ENCODE measurements at regions of chr9 and their contacts with region 1.

Region 1: DNA sequence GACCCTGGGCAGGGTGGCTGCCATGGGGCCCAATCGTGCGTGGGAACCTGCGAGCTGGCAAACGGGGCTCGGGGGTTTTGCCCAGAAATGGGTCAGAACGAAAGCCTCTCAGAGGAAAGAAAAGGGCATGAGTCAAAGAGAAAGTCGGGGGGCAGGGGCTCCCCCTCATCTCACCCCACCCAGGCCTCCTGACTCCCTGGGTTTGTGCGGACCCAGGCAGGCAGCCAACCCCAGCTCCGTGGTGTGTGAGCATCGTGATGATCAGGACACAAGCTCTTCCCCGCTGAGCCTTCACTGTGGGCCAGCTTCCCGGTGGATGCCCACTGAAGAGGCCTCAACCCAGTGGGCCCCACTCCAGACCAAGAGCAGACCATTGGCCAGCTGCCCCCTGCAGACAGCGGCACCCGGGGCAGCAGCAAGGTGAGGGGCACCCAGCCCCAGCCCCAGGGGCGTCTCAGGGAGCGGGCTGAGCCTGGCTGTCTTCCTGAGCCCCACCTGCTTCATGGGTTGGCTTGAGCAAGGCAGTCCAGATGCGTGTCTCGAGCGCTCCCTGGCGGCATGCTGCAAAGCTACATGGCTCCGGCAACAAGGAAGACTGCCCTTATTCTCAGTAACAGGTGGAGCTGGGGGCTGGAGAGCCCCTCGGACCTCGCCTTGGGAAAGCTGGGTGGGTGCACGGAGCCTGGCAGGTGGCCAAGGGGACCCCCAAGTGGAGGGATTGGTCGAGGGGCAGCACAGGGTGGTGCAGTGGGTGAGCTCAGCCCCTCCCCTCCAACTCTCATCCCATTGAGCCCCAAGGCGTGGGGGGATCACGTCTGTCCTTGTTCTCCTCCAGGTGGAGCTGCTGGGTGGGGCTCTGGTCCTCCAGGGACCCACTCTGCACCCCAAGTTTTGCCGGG is 3.2 kb upstream of the FUT7 start:
- DNase-seq: peak; percentile 81
- H3K4me3 Mint-ChIP-seq: peak overlapping the region; percentile 25
- H3K27ac Mint-ChIP-seq: no peak overlapping the region
- H3K4me1 Mint-ChIP-seq: no peaks in the 10 kb centered on the region
- H3K27me3 Mint-ChIP-seq: no peaks in the 10 kb centered on the region
- CTCF ChIP-seq: peak; percentile 87

Region 2: DNA sequence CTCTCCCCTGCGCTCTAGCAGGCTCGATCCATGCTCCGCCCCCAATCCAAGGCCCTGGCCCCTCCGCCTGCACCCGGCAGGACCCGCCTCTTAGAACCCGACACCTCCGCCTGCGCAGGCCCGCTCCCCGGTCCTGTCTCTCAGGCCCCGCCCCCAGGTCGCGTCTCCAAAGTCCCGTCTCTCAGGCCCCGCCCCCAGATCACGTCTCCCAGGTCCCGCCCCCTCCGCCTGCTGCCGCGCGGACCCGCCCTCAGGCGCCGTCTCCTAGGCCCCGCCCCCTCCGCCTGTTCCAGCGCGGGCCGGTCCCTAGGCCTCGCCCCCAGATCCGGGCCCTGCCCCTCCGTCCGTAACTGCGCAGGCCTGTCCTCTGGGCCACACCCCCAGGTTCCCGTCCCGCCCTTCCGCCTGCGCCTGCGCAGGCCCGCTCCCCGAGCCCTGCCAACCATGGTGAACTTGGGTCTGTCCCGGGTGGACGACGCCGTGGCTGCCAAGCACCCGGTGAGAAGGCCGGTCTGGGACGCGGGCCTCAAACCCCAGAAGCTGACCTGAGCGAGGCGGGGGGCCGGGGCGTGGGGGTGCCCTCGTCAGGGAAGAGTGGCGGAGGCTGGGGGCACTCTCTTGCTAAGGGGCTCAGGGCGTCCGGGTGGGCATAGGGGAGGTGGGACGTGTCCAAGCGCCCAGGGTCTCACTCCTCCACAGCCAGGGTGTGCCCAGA is 244.0 kb before region 1 on chr9 and contains the start of gene TMEM141:
- CTCF ChIA-PET with region 1: interaction called, 24 read pairs
- POLR2A ChIA-PET with region 1: no interaction called
- intact Hi-C with region 1: loop called (anchors 1 kb)
- DNase-seq: peak; percentile 99
- H3K4me3 Mint-ChIP-seq: peak within 1 kb of the TSS; percentile 81
- H3K27ac Mint-ChIP-seq: peak within 1 kb of the TSS; percentile 94
- H3K4me1 Mint-ChIP-seq: peaks cover 5% of the 10 kb centered on the region
- H3K27me3 Mint-ChIP-seq: no peaks in the 10 kb centered on the region
- CTCF ChIP-seq: no peak
- total RNA-seq, gene TMEM141: 56.0 and 70.4 TPM in 2 replicates

Region 3: DNA sequence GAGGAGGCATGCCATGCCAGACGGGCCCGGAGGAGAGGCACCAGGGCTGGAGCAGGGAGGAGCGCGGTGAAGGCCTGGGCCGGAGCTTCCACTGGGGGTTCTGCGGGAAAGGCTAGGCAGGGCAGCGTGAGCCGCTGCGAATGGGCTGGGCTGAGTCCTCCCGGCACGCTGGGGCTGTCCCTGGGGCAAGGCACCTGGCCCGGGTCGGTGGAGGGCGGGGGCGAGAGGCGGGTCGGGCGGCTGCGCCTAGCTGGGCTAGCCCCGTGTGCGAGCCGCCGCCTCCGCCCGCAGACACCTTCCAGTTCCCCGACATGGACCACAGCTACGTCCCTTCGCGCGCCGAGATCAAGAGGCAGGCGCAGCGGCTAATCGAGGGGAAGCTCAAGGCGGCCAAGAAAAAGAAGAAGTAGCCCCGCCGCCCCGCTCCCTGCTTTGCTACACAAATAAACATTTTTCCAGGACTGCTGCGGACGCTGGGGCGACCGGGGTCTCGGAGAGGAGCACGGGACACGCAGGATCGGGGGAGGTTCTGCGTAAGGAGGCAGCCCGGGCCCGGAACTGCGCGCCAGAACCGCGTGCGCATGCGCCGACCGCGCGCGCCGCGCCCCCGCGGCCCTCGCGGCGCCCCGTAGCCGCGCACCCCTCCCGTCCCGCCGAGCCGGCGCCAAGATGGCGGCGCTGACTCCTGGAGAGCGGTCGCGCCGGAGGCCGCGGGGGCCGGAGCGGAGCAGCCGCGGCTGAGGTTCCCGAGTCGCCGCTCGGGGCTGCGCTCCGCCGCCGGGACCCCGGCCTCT is 227.6 kb before region 1 on chr9 and contains the start of gene RABL6:
- CTCF ChIA-PET with region 1: interaction called, 11 read pairs
- POLR2A ChIA-PET with region 1: no interaction called
- intact Hi-C with region 1: no loop called
- DNase-seq: peak; percentile 64
- H3K4me3 Mint-ChIP-seq: peak within 1 kb of the TSS; percentile 76
- H3K27ac Mint-ChIP-seq: no peak within 1 kb of the TSS
- H3K4me1 Mint-ChIP-seq: no peaks in the 10 kb centered on the region
- H3K27me3 Mint-ChIP-seq: no peaks in the 10 kb centered on the region
- CTCF ChIP-seq: no peak
- total RNA-seq, gene RABL6: 77.8 and 84.2 TPM in 2 replicates

Region 4: GRCh38 chr9:136944519-136945279 is 90.4 kb before region 1 on chr9 and contains the starts of genes C8G and FBXW5:
- CTCF ChIA-PET with region 1: interaction called, 27 read pairs
- POLR2A ChIA-PET with region 1: interaction called, 3 read pairs
- intact Hi-C with region 1: loop called (anchors 1 kb)
- DNase-seq: peak; percentile 93
- H3K4me3 Mint-ChIP-seq: peak within 1 kb of the TSS; percentile 70
- H3K27ac Mint-ChIP-seq: peak within 1 kb of the TSS; percentile 69
- H3K4me1 Mint-ChIP-seq: no peaks in the 10 kb centered on the region
- H3K27me3 Mint-ChIP-seq: no peaks in the 10 kb centered on the region
- CTCF ChIP-seq: peak; percentile 91
- total RNA-seq, gene C8G: 1.0 and 1.1 TPM in 2 replicates
- total RNA-seq, gene FBXW5: 88.8 and 100 TPM in 2 replicates

Region 5: GRCh38 chr9:137046098-137046787 is 11.1 kb after region 1 on chr9 and contains the start of gene NPDC1:
- CTCF ChIA-PET with region 1: interaction called, 15 read pairs
- POLR2A ChIA-PET with region 1: interaction called, 4 read pairs
- intact Hi-C with region 1: no loop called
- DNase-seq: peak; percentile 82
- H3K4me3 Mint-ChIP-seq: peak within 1 kb of the TSS; percentile 74
- H3K27ac Mint-ChIP-seq: no peak within 1 kb of the TSS
- H3K4me1 Mint-ChIP-seq: no peaks in the 10 kb centered on the region
- H3K27me3 Mint-ChIP-seq: no peaks in the 10 kb centered on the region
- CTCF ChIP-seq: peak; percentile 87
- total RNA-seq, gene NPDC1: 161 and 171 TPM in 2 replicates

Region 6: DNA sequence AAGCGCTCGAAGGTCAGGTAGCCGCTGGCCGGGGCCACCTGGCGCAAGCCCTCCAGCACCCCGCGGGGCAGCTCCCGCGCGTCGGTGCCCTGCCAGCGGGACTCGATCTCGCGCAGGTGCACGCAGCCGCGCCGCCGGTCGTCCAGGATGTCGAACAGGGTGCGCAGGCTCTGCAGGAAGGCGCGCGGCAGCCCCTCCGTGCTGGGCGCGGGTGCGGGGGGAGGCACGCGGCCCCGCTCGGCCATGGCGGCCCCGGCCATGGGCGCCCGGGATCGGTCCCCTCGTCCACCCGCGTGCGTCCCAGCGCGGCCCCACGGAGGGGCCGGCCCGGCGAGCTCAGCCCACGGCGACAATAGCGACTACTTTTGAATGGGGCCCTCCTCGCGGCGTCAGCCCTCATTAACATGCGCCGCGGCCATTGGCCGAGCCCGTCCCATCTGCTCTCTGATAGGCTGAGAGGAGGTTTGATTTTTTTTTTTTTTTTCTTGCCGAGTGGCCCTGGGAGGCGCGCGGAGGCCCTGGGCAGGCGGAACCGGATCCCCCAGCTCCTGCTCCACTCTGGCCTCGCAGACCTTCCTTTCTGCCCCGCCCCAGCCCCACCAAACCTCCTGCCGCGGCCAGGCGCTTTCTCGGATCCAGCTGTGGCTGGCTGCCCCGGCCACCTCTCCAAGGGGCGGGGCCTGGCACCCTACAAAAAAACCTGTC is 35.2 kb after region 1 on chr9 and contains the start of gene SAPCD2:
- CTCF ChIA-PET with region 1: interaction called, 85 read pairs
- POLR2A ChIA-PET with region 1: interaction called, 4 read pairs
- intact Hi-C with region 1: no loop called
- DNase-seq: peak; percentile 90
- H3K4me3 Mint-ChIP-seq: peak within 1 kb of the TSS; percentile 72
- H3K27ac Mint-ChIP-seq: no peak within 1 kb of the TSS
- H3K4me1 Mint-ChIP-seq: peaks cover 11% of the 10 kb centered on the region
- H3K27me3 Mint-ChIP-seq: no peaks in the 10 kb centered on the region
- CTCF ChIP-seq: no peak
- total RNA-seq, gene SAPCD2: 5.7 and 15.7 TPM in 2 replicates

Measured in MCF 10A (cell line).